ENCODE measurements at regions of chr14 and their contacts with region 1.

Region 1: DNA sequence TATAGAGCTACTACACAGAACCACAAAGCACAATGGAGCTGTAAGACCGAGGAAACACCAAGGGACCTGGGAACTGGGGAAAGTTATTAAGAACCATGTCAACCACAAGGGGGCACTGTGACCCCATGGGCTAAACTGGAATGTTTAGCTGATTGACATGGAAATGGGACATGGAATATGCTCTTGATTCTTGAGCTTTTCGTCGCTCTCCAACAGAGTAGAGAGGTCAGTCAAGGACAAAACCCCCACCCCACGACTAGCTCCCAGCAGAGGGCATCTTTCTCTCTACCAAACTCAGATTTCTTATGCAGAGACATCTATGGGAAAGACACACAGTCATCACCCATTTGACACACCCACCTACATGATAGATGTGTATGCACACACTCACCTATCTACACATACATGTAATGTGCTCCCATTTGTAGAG is 10.1 kb downstream of the NDRG2 start:
- DNase-seq: peak; percentile 85
- H3K4me3 Mint-ChIP-seq: no peak overlapping the region
- H3K27ac Mint-ChIP-seq: no peak overlapping the region
- H3K4me1 Mint-ChIP-seq: no peaks in the 10 kb centered on the region
- H3K27me3 Mint-ChIP-seq: peaks cover 2% of the 10 kb centered on the region

Region 2: DNA sequence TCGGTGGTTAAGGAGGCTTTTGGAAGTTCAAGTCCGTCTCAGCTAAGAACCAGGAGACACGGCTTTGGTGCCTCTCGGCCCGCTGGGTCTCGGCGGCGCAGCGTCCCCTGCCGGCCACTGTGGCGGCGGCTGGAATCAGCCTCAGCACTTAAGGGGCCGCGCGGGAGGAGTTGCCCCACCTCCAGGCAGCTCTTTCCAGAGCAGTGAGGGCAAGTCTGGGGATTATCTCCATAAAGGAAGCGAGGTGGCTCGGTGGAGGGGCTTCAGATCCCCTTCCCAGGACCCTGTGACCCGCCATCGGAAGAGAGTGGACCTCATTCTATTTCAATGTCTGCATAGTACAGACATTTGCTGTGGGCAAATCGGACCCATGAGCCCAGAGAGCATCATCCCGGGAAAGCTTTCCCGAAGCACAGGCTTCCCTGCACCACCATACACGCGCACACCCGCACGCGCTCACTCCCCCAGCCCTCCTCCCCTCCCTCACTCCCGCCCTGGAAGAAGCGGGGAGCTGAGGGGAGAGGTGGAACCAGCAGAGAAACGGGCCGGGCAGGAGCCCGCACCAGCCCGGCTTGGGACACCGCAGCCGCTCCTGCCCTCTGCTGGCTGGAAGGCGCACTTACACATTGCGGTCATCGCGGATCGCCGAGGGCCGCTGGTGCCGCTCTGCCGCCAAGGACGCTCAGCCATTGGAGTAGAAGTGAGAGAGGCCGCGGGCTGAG is 43.6 kb before region 1 on chr14:
- CTCF ChIA-PET with region 1: interaction called, 16 read pairs
- POLR2A ChIA-PET with region 1: no interaction called
- intact Hi-C with region 1: no loop called
- DNase-seq: peak; percentile 86
- H3K4me3 Mint-ChIP-seq: peak overlapping the region; percentile 84
- H3K27ac Mint-ChIP-seq: no peak overlapping the region
- H3K4me1 Mint-ChIP-seq: peaks cover 11% of the 10 kb centered on the region
- H3K27me3 Mint-ChIP-seq: peaks cover 25% of the 10 kb centered on the region

Region 3: DNA sequence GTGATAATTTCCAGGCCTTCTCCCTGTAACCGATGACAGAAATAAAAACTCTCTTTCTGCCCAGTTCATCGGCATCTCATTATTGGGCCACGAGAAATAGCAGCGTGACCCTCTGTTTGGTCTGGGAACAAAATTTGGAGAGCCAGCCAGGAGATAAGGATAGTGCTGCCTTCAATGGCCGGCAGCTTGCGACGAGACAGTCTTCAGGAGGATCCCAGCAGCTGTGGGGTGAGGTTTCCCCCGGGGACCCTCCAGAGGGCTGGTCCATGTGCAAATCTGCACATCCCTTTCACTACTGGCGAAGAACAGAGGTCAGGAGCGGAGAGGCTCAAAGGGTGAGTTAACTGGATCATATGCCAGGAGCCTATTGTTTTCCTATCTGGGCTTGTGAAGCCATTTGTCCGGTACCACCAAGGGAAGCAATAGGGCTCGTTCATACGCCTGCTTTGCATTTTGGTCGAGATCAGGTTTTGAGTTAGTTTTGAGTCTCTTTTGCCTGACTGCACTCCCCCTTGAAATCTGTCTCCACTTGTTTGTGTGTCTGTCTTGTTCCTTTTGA is 10.9 kb before region 1 on chr14:
- CTCF ChIA-PET with region 1: interaction called, 70 read pairs
- POLR2A ChIA-PET with region 1: no interaction called
- intact Hi-C with region 1: no loop called
- DNase-seq: no peak
- H3K4me3 Mint-ChIP-seq: no peak overlapping the region
- H3K27ac Mint-ChIP-seq: no peak overlapping the region
- H3K4me1 Mint-ChIP-seq: no peaks in the 10 kb centered on the region
- H3K27me3 Mint-ChIP-seq: no peaks in the 10 kb centered on the region

Region 4: DNA sequence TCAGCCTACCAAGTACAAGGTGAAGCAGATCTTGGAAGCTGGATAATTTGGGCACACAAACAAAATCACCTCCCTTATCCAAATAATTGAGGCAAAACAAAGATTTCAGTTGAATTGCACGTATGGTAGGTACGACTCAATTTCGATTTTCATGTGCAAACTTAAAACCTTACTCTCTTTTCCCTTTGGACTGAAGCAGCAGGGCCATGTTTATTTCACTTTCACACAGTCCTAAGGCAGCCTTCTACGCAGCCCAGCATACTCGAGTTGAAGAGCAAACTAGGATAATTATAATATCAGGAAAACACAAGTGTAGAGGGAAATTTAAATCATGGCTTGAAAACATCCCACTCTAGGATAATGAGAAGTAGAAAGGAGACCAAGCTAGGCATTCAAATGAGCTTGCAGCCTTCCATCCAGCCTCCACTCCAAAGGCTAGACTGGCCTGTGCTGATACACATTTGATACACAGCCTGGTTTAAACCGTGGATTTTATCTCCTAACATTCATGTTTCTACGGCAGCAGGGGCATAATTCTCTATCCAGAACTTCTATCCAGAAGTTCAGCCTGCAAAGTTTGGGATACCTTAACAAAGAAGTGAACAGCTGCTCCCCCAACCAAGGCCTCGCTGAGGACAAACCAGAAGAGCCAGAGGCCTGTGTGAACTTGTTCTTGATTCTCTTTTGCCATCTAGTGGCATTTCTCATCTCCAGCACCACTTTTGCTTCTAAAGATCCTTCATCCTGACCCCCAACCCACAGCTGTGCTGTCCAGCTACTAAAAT is 25.0 kb after region 1 on chr14:
- CTCF ChIA-PET with region 1: interaction called, 115 read pairs
- POLR2A ChIA-PET with region 1: no interaction called
- intact Hi-C with region 1: loop called (anchors 1 kb)
- DNase-seq: peak; percentile 18
- H3K4me3 Mint-ChIP-seq: no peak overlapping the region
- H3K27ac Mint-ChIP-seq: no peak overlapping the region
- H3K4me1 Mint-ChIP-seq: peaks cover 11% of the 10 kb centered on the region
- H3K27me3 Mint-ChIP-seq: no peaks in the 10 kb centered on the region

Region 5: DNA sequence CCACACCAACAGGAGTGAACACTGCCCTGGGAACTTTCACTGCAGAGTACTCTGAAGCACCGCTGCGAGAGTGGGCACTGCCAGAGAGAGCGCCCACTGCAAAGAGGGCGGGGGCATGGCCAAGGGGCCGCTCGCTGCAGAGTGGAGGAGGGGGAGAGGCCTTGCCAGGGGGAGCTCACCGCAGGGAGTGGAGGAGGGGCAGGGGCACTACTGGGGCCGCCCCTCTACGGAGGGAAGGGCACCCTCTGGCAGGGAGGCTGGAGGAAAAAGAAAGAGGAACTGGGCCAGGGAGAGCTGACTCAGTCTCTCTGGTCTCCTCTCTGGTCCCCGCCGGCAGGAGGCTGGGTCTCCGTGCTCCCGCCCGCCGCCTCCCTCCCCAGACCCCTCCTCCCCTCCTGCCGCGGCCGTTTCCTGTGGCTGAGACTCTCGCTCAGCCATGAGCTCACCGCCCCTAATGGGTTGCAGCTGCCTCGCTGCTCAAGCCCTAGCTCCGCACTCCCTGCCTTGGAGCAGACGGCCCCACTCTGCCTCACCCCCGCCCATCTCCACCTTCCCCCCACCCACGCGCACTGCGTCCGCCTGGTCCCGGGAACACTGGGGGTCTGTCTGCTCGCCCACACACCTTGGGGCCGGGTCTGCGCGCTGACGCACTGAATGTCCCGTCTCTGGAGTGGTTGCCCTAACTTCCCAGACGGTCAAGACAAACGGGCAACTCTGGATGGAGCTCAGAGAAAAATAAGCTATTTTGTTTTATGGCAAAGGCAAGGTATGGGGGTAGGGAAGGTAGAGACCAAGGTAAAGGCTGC is 56.7 kb after region 1 on chr14:
- CTCF ChIA-PET with region 1: interaction called, 31 read pairs
- POLR2A ChIA-PET with region 1: no interaction called
- intact Hi-C with region 1: no loop called
- DNase-seq: peak; percentile 83
- H3K4me3 Mint-ChIP-seq: peak overlapping the region; percentile 60
- H3K27ac Mint-ChIP-seq: no peak overlapping the region
- H3K4me1 Mint-ChIP-seq: peaks cover 33% of the 10 kb centered on the region
- H3K27me3 Mint-ChIP-seq: peaks cover 49% of the 10 kb centered on the region

Region 6: GRCh38 chr14:21103710-21104447 is 89.1 kb after region 1 on chr14:
- CTCF ChIA-PET with region 1: interaction called, 334 read pairs
- POLR2A ChIA-PET with region 1: interaction called, 13 read pairs
- intact Hi-C with region 1: loop called (anchors 1 kb)
- DNase-seq: peak; percentile 96
- H3K4me3 Mint-ChIP-seq: peak overlapping the region; percentile 85
- H3K27ac Mint-ChIP-seq: peak overlapping the region; percentile 76
- H3K4me1 Mint-ChIP-seq: peaks cover 41% of the 10 kb centered on the region
- H3K27me3 Mint-ChIP-seq: no peaks in the 10 kb centered on the region

Measured in activated CD4-positive, alpha-beta memory T cell treated with anti-CD3 and anti-CD28 coated beads for 36 hours (primary cell).